Mammary epithelial cell (primary cell): ENCODE measurements at regions of chrX and their contacts with region 1.

Region 1: DNA sequence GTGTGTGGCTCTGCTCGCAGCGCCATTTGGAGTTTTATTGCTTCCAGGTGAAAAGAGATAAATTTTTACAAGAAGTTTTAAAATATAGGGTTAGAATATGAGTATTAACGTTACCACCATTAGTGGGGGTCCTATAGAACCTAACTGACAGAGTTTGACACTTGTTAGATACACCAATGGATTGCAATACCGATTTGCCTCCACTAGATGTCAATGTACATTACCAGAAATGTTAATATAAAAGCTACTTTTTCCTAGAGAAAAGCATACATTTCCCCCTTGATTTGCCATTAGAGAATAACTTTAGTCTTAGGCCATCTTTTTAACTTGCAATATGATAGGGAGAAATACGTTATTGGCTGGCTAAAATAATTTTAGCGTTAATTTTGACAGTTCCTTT is 108.4 kb downstream of the LINC00632 start:
- DNase-seq: no peak
- H3K4me3 ChIP-seq: no peak overlapping the region
- H3K27ac ChIP-seq: no peak overlapping the region
- H3K4me1 ChIP-seq: no peaks in the 10 kb centered on the region
- H3K27me3 ChIP-seq: no peaks in the 10 kb centered on the region
- CTCF ChIP-seq: peak; percentile 53 to 54

Region 2: DNA sequence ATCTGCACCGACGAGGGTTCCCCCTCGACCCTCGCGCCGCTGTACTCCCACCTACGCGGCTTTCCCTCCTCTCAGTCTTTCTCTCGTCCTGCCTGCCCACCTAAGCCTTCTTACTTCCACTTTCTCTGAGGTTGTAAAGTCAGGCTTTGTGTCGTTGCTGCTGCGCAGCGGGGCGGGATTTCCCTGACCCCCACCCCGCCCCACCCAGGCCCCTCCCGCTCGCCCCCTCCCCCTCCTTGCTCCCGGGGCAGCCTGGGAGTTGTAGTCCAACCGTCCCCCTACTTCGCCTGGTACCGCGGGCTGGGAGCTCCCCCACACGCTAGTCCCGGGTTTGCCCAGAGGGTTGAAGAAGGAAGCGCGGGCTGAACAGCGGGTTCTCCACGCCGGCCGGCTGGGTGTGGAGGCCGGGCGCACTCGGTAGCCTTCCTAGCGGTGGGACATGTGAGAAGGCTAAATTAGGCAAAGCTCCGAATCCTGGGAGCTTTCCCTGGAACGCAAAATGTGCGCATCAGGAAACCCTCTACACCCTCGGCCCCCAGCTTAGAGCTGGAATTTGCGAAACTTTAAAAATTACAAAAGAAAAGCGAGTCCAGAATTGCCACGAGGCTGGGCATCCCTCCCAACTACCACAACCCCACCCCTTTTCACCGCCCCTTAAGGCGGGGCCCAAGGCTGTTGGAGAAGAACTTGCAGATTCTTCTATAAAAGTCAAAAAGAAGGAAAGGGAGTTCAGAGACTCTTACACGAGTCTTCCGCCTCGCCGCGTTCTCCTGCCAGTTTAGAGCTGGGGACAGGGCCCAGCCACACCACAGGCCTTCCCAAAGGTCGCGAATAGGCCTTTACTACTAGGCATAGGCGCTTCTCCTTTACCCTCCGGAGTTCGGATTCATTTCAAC is 884.8 kb before region 1 on chrX and contains the start of gene ATP11C:
- CTCF ChIA-PET with region 1: no interaction called
- dilution Hi-C with region 1: no loop called
- in situ Hi-C with region 1: no loop called
- intact Hi-C with region 1: no loop called
- DNase-seq: peak; percentile 78
- H3K4me3 ChIP-seq: peak within 1 kb of the TSS; percentile 57 to 73 (median 58)
- H3K27ac ChIP-seq: peak within 1 kb of the TSS; percentile 62
- H3K4me1 ChIP-seq: no peaks in the 10 kb centered on the region
- H3K27me3 ChIP-seq: no peaks in the 10 kb centered on the region
- CTCF ChIP-seq: no peak
- total RNA-seq, gene ATP11C: 10.8 to 25.0 TPM

Region 3: DNA sequence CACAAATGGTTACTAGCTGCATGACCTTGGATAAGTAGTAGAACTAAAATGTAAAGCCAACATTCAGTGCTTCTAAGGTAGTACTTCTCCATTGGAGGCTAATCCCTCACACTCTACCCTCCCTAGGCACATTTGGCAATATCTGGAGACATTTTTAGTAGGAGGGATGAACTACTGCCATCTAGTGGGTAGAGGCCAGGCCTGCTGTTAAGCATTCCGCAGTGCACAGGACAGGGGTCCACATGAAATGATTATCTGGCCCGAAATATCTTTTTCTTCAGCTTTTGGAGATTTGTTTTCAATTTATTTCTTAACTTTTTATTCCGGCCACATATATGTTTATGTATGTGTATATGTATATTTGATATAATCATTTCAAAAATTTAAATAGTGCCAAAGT is 460.4 kb after region 1 on chrX:
- CTCF ChIA-PET with region 1: no interaction called
- dilution Hi-C with region 1: no loop called
- in situ Hi-C with region 1: no loop called
- intact Hi-C with region 1: loop called (anchors 5 kb)
- DNase-seq: no peak
- H3K4me3 ChIP-seq: no peak overlapping the region
- H3K27ac ChIP-seq: no peak overlapping the region
- H3K4me1 ChIP-seq: no peaks in the 10 kb centered on the region
- H3K27me3 ChIP-seq: no peaks in the 10 kb centered on the region
- CTCF ChIP-seq: peak; percentile 77 to 82